ENCODE measurements at regions of chr11 and their contacts with region 1.

Region 1: DNA sequence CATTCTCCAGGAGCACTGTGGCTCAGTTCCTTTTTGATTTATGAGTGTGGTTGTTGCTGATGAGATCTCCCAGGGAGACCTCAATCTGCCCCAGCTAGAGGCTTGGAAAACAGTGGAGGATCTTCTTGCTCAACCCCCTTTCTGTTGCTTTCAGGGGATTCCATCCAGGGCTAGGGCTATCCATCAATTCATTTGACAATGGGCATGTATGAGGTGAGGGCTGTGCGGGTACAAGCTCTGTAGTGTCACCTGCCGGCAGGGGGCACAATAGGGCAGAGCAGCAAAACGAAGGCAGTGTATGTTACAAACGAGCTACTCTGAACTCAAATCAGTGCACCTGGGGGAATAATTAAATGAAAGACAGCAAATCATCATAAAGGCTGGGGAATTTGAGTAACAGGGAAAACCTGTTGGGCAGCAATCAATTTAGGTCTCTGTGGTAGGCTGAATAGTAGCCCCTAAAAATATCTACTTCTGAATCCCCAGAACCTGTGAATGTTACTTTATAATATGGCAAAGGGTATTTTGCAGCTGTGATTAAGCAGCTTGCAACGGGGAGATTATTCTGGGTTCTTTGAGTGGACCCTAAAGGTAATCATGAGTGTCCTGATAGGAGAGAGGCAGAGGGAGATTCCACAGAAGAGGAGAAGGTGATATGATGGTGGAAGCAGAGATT is 170.3 kb upstream of the ZBED5 start:
- H3K4me3 ChIP-seq: no peak overlapping the region
- H3K27ac ChIP-seq: no peak overlapping the region
- H3K4me1 ChIP-seq: no peaks in the 10 kb centered on the region
- CTCF ChIP-seq: no peak

Region 2: GRCh38 chr11:10792398-10792975 is 235.7 kb before region 1 on chr11:
- CTCF ChIA-PET with region 1: interaction called, 97 read pairs
- POLR2A ChIA-PET with region 1: no interaction called
- H3K4me3 ChIP-seq: no peak overlapping the region
- H3K27ac ChIP-seq: no peak overlapping the region
- H3K4me1 ChIP-seq: no peaks in the 10 kb centered on the region
- CTCF ChIP-seq: peak; percentile 90

Region 3: DNA sequence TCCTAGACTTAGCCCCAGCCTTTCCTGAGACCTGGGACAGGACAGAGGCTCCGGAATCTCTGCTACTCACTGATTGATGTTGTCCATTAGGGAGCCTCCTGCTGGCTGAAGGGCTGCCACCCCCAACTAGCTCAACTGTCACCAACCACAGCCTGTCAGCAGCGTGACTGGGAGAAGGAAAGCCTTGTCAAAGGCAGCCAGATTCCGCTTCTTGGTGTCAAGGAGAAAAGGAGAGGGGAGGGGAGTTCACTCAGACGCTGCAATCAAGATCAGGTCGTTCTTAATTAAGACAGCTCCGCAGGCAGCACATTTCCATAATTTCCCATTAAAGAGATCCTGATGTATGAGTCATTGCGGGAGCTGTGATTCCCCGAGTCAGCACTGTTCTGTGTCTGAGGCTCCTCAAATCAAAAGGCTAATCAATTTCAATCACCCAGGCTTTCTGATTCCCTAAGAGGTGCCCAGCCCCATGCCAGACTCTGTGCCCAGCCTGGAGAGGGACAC is 17.5 kb before region 1 on chr11:
- CTCF ChIA-PET with region 1: interaction called, 18 read pairs
- POLR2A ChIA-PET with region 1: no interaction called
- H3K4me3 ChIP-seq: no peak overlapping the region
- H3K27ac ChIP-seq: no peak overlapping the region
- H3K4me1 ChIP-seq: no peaks in the 10 kb centered on the region
- CTCF ChIP-seq: no peak

Region 4: GRCh38 chr11:11044137-11044855 is 16.1 kb after region 1 on chr11:
- CTCF ChIA-PET with region 1: interaction called, 40 read pairs
- POLR2A ChIA-PET with region 1: no interaction called
- H3K4me3 ChIP-seq: no peak overlapping the region
- H3K27ac ChIP-seq: no peak overlapping the region
- H3K4me1 ChIP-seq: no peaks in the 10 kb centered on the region
- CTCF ChIP-seq: no peak

Region 5: GRCh38 chr11:11230802-11231562 is 202.8 kb after region 1 on chr11:
- CTCF ChIA-PET with region 1: interaction called, 13 read pairs
- POLR2A ChIA-PET with region 1: no interaction called
- H3K4me3 ChIP-seq: no peak overlapping the region
- H3K27ac ChIP-seq: no peak overlapping the region
- H3K4me1 ChIP-seq: no peaks in the 10 kb centered on the region
- CTCF ChIP-seq: no peak

Region 6: DNA sequence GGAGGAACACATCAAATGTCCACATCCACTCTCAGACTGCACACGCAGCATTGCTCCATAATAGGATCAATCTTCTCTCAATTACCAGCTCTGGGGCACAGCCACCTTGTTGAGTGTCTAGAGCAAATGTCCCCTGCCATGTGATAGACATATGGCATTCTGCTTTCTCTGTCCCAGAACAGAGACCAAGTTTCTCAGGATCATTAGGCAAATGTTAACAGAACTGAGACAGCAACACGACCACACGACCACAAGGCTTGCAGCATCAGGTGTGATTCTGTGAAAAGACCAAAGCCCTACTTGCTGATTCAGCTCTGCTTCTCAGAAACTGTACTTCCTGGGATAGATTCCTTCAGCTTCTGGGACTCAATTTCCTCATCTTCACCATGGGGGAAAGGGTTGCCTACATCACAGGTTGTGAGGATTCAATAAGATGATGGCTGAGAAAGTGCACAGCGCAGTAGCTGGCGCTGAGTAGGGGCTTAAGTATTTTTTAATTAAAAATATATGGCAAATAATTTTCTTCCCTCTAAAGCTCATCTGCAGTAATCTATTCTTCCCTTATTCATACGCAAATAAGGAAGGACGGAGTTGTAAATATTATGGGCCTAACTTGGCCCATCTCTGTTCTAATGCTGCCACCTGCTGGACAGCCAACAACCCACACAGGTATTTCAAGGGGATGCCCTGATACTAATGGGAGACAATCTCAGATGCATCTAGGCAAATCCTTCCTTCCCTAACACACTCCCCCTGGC is 759.3 kb after region 1 on chr11:
- CTCF ChIA-PET with region 1: interaction called, 89 read pairs
- POLR2A ChIA-PET with region 1: no interaction called
- H3K4me3 ChIP-seq: no peak overlapping the region
- H3K27ac ChIP-seq: no peak overlapping the region
- H3K4me1 ChIP-seq: no peaks in the 10 kb centered on the region
- CTCF ChIP-seq: peak; percentile 55